Naive thymus-derived CD8-positive, alpha-beta T cell (primary cell): ENCODE measurements at regions of chr6 and their contacts with region 1.

Region 1: DNA sequence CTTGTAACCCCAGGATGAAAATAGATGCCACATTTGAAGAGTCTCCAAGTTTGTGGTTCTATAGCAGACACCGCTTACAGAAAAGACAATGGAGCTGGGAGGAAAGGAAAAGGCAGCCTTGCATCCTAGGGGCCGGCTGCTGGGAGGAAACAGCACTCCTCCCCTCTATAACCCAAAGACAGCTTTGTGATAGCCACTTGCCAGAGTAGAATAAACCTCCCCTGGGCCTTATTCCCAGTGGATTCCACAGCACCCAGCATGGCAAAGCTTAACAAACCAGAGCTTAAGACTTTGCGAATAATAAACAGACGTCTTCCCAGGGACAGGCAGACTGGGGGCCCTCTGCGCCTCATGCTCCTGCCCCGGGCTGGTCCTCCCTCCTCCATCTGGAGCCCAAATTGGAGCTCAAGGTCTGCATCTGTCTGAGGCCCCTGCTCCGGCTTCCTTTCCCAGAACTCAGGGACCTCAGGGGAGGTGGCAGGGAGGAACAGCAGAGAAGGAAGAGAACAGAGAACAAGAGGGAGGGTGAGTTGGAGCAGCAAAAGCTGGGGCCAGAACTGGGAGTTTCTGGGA is 8.8 kb upstream of the TAF8 start:
- DNase-seq: peak in 2 of 10 donors; percentile 10 to 22
- ATAC-seq: no peak
- H3K4me3 Mint-ChIP-seq: peak overlapping the region; percentile 80 to 99 (median 97)
- H3K27ac Mint-ChIP-seq: peak overlapping the region; percentile 88 to 99 (median 94)
- H3K4me1 Mint-ChIP-seq: peaks cover 44 to 90% (median 80%) of the 10 kb centered on the region in 4 donors
- H3K27me3 Mint-ChIP-seq: no peaks in the 10 kb centered on the region

Region 2: DNA sequence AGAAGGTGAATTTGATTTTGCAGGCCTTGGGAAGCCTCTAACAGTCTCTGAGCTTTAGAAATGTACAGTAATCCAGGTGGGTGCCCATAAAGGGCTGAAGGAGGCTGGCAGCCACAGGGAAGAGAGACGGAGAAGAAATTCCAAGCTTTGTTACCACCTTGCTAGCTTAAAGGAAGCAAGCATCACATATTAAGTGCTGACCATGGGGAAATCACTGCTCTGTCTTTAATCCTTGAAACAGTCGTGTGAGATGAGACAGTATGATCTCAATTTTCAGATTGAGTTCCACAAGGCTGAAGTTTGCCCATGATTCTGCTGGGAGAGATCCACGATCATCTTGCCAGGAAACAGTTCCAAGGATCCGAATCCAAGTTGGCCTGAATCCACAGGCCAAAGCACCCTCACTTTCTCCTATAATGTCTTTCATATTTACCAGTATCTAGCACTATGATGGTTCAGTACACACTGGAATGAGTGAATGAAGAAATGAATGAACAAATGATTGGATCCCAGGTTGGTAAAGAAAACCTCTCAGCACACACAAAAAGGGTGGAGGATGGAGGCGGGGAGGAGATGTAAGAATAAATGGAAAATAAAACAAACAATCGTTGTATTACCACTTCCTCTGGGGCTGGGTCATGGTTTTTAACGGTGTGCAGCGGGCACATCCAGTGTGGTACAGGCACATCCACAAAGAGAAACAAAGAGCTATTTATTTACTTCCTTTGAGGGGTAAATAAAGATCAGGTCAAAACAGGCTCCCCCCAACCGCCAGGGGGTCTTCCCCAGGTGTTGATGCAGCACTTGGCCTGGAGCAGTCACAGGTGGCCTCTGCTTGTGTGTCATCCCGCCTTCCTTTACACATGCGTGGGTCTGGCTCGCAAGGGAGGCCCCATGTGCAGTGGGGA is 19.5 kb before region 1 on chr6:
- POLR2A ChIA-PET with region 1: interaction called, 42 read pairs
- DNase-seq: peak; percentile 63 to 92 (median 82)
- ATAC-seq: peak; percentile 80 to 92
- H3K4me3 Mint-ChIP-seq: peak overlapping the region; percentile 66 to 91 (median 85)
- H3K27ac Mint-ChIP-seq: peak overlapping the region; percentile 93 to 99 (median 98)
- H3K4me1 Mint-ChIP-seq: peaks cover 45 to 96% (median 82%) of the 10 kb centered on the region in 4 donors
- H3K27me3 Mint-ChIP-seq: no peaks in the 10 kb centered on the region

Region 3: DNA sequence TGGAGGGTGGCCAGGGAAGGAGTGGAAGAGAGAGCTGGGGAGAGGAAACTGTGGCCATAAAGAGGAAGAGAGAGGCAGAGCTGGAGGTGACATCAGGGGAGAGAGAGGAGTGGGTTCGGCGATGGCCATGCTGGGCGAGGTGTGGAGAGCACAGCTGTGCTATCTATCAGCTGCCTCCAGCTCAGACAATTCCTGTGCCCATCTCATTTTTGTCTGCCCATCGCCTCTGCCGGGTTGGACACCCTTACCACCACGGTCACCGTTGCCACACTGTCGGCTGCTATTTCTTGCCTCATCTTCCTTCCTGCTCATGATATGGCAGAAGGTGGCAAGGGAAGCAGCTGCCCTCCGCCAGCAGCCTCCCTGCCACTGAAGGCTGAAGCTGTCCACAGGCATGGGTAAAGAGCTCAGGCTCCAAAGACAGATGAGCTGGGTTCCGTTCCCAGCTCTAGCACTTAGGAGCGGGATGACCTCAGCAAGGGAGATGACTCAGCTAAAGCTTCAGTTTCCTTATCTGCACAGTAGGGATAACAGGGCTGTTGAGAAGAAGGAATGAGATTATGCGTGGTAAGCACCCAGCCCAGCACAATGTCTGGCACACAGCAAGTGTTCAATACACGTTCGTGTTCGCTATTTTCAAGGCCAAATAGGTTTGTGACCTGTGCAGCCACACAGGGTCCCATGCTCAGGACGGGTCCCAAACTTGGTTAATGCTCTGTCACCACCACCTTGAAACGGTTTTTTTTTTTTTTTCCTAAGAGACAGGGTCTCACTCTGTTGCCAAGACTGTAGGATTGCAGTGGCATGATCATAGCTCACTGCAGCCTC is 13.1 kb before region 1 on chr6:
- POLR2A ChIA-PET with region 1: interaction called, 42 read pairs
- DNase-seq: no peak
- ATAC-seq: no peak
- H3K4me3 Mint-ChIP-seq: peak overlapping the region; percentile 61 to 86 (median 80)
- H3K27ac Mint-ChIP-seq: peak overlapping the region; percentile 90 to 99 (median 96)
- H3K4me1 Mint-ChIP-seq: peaks cover 55 to 98% (median 96%) of the 10 kb centered on the region in 4 donors
- H3K27me3 Mint-ChIP-seq: no peaks in the 10 kb centered on the region